Motor neuron (in vitro differentiated cells): ENCODE measurements at regions of chr1 and their contacts with region 1.

Region 1: GRCh38 chr1:22704440-22705067 is 6.1 kb upstream of the EPHB2 start:
- ATAC-seq: peak; percentile 95 to 100 (median 98)
- H3K4me3 ChIP-seq: no peak overlapping the region
- H3K27ac ChIP-seq: no peak overlapping the region
- H3K4me1 ChIP-seq: peaks cover 8% of the 10 kb centered on the region in 2 donors

Region 2: GRCh38 chr1:22364764-22365163 is 339.8 kb before region 1 on chr1:
- in situ Hi-C with region 1: no loop called
- ATAC-seq: peak in 4 of 8 experiments; percentile 19 to 40 (median 25)
- H3K4me3 ChIP-seq: no peak overlapping the region
- H3K27ac ChIP-seq: no peak overlapping the region
- H3K4me1 ChIP-seq: peaks cover 22% of the 10 kb centered on the region in 2 donors

Region 3: DNA sequence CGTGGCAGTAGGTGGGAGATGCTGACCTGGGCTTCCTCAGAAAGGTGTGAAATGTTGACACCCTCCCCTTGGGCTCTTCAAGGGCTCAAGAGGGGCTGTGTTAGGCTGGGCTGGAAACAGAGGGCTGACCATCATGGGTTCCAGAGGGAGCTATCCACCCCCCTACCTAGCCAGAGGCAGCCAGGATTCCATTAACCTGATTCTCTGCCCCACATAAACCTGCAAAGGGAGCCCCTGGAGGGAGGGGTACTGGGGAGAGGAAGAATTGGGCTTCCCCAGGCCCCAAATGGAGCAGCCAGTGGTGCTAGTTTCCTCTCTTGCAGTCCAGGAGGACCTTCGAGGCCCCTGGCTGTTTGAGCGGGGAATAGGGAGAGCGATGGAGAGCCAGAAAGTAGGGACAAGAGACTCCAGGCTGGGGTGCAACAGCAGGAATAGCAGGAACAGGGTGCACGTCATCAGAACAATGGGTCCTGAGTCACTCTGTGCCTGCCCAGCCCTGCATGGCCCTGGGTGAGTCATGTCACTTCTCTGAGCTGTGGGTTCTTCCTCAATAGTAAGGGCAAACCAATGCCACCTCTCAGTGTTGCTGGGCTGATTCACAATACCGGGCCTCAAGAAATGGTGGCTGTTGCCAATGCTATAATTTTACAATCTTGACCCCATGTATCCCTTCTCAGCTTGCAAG is 127.3 kb after region 1 on chr1:
- in situ Hi-C with region 1: loop called in 1 of 9 experiments (anchors 25 kb)
- ATAC-seq: peak in 4 of 8 experiments; percentile 11 to 94 (median 54)
- H3K4me3 ChIP-seq: no peak overlapping the region
- H3K27ac ChIP-seq: no peak overlapping the region
- H3K4me1 ChIP-seq: peaks cover 55% of the 10 kb centered on the region in 2 donors

Region 4: DNA sequence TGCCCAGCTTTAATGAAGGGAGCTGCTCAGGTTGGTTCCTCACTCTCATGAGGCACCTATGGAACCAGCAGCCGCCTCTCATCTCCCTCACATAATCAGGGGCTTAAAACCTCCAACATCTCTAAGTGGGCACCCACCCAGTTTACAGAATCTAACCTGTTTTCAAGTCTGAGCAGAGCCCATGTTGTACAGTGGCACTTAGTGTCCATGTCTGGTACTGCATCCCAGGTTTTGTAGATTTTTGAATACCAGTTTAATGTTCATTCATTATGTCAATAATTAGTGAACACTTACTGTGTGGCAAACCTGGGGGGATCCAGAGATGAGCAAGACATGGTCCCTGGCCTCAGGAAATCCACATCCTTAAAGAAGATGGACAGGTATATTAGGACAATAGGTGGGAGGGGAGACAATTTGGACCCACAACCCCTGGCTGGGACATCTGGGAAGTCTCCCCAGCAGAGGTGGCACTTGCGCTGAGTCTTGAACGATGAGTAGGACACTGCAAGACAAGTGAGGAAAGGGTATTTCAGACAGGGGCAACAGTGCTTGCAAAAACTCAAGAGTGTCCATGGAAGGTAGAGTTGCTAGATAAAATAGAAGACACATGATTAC is 184.8 kb after region 1 on chr1:
- in situ Hi-C with region 1: loop called in 4 of 9 experiments (anchors 25 kb)
- ATAC-seq: peak; percentile 31 to 72 (median 47)
- H3K4me3 ChIP-seq: no peak overlapping the region
- H3K27ac ChIP-seq: no peak overlapping the region
- H3K4me1 ChIP-seq: peaks cover 0 to 8% of the 10 kb centered on the region in 2 donors